GM10248 (cell line): ENCODE measurements at regions of chr3 and their contacts with region 1.

Region 1: DNA sequence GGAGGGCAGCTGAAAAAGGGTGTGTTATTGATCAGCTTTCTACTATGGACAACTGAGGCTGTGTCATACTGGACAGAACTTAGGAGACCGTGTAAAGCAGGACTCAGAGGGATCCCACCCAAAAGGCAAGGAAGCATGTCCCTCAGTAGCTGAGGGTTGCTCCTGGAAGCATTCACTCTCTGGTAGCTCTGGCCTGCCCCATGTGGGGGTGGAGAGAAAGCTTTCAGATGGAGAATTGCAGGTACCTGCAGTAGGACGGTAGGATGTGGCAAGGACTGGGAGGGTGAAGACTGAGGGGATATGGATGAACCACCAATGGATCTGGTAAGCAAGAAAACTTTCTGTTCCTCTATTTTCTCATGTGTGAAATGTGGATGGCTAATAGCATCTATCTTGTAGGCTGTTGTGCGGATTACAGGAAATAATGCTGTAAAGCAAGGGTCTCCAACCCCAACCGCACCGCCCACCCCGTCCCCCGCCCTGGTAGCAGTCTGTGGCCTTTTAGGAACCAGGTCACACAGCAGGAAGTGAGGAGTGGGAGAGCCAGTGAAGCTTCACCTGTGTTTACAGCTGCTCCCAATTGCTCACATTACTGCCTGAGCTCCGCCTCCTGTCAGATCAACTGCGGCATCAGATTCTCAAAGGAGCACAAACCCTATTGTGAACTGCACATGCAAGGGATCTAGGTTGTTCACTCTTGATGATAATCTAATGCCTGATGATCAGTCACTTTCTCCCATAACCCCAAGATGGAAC is 157.7 kb upstream of the PROK2 start:
- DNase-seq: no peak
- CTCF ChIP-seq: no peak

Region 2: DNA sequence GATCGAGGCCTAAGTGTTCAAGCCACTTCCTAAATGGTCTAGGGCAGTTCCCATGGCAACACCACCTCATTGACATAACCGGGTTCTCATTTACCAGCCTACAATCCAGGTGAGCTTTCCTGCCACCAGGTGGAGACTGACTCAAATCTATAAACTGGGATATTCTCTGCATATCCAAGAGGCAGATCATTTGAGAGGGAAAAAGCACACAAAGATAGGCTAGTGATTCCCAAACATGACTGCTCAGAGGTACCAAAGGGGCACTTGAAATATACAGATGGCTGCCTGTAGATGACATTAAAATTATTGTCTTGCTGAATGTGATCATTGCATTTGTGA is 16.4 kb before region 1 on chr3:
- CTCF ChIA-PET with region 1: interaction called, 12 read pairs
- POLR2A ChIA-PET with region 1: no interaction called
- DNase-seq: peak; percentile 35
- CTCF ChIP-seq: peak; percentile 29